HCT116 (cell line): ENCODE measurements at regions of chr19 and their contacts with region 1.

Region 1: DNA sequence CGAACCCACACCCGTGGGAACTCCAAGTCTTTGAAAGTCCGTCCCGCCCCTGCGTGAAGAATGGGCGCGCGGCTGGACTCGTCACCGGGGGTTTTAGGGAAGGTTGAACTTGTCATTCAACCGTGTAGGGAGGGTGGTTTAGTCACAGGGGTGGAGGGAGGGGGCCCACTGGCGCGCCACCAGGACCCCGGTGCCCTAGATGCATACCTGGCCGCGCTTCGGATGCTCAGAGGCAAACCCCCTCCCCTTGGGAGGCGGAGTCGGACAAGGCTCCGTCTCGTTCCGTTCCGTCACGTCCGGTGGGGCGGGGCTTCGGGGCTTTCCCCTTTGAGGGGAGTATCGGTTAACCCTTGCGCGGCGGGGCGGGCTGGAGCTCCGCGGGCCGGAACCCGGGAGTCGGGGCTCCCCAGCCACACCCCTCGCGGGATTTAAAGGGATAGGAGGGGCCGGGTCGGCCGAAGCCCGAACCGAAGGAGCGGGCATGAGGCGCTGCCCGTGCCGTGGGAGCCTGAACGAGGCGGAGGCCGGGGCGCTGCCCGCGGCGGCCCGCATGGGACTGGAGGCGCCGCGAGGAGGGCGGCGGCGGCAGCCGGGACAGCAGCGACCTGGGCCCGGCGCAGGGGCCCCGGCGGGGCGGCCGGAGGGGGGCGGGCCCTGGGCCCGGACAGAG is at the starts of genes COQ8B and ITPKC:
- DNase-seq: peak; percentile 95
- ATAC-seq: peak; percentile 56
- H3K4me3 ChIP-seq: peak within 1 kb of the TSS; percentile 63 to 84
- H3K27ac ChIP-seq: peak within 1 kb of the TSS; percentile 92
- H3K4me1 ChIP-seq: peaks cover 13 to 61% of the 10 kb centered on the region in 2 experiments
- H3K27me3 ChIP-seq: no peaks in the 10 kb centered on the region
- CTCF ChIP-seq: no peak
- POLR2A ChIP-seq: no peak
- RAD21 ChIP-seq: no peak
- total RNA-seq, gene COQ8B: 47.1 TPM
- total RNA-seq, gene ITPKC: 11.4 TPM

Region 2: GRCh38 chr19:40623403-40624251 is 93.2 kb before region 1 on chr19:
- CTCF ChIA-PET with region 1: no interaction called
- POLR2A ChIA-PET with region 1: no interaction called
- RAD21 ChIA-PET with region 1: no interaction called
- intact Hi-C with region 1: no loop called
- DNase-seq: peak; percentile 80
- ATAC-seq: peak; percentile 96
- H3K4me3 ChIP-seq: no peak overlapping the region
- H3K27ac ChIP-seq: peak overlapping the region; percentile 55
- H3K4me1 ChIP-seq: peaks cover 14 to 20% of the 10 kb centered on the region in 2 experiments
- H3K27me3 ChIP-seq: no peaks in the 10 kb centered on the region
- CTCF ChIP-seq: no peak
- POLR2A ChIP-seq: no peak
- RAD21 ChIP-seq: no peak

Region 3: DNA sequence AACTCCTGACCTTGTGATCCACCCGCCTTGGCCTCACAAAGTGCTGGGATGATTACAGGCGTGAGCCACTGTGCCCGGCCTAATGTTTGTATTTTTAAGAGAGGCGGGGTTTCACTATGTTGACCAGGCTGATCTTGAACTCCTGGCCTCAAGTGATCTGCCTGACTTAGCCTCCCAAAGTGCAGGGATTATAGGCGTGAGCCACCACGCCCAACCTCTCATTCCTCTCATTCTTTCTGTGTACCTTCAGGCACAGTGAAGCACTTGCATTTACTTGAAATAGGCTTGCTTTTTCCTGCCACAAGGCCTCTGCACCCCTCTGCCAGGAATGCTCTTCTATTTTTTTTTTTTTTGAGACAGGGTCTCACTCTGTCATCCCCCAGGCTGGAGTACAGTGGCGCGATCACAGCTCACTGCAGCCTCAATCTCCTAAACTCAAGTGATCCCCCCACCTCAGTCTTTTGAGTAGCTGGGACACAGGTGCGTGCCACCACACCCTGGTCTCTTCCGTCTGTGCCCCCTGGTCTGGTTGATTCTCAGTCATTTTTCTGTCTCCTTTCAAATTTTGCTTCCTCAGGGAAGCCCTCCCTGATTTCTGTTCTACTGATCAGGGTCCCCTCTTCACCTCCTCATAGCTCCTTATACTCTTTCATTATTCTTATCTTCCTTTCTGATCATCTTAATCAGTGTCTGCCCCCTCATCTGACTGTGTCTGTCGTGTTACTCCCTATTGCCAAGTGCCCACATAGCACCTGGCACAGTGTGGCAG is 18.4 kb after region 1 on chr19:
- CTCF ChIA-PET with region 1: no interaction called
- POLR2A ChIA-PET with region 1: no interaction called
- RAD21 ChIA-PET with region 1: no interaction called
- intact Hi-C with region 1: no loop called
- DNase-seq: no peak
- ATAC-seq: no peak
- H3K4me3 ChIP-seq: no peak overlapping the region
- H3K27ac ChIP-seq: no peak overlapping the region
- H3K4me1 ChIP-seq: peaks cover 5 to 12% of the 10 kb centered on the region in 2 experiments; a peak in 3 of 4 replicates
- H3K27me3 ChIP-seq: no peaks in the 10 kb centered on the region
- CTCF ChIP-seq: no peak
- POLR2A ChIP-seq: no peak
- RAD21 ChIP-seq: no peak

Region 4: DNA sequence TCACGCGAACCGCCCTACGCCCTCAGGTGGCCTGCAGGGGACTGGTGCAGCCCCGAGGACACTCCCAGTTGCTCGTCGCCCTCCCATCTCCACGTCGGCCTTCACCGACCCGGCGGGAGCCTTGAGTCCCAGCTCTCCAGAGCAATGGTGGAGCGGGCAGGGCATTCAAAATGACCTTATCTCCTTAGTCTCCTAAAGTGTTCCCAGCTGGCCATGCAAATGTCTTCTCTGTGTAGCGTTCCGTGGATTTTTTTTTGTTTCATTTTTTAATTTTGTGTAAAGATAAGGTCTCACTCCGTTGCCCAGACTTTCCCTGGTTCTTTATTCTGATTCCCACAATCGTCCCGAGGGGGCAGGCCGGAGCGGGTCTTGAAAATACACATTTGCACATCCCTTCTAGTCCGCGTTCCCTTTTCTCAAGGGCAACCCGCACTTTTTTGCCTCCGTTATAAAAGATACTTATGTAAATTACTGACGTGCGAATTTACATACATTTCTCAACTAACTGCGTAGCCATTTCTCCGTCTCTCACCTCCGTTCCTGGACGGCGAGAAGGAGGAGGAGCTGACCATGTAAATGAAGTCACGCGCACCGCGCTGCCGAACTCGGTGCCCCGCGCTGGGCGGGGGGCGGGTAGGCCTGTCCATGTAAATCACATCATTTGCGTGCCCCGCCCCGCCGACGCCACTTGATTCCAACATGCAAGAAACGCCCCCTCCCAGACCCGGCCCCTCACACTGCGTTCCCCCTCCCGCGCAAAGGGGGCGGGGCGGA is 81.6 kb after region 1 on chr19:
- CTCF ChIA-PET with region 1: no interaction called
- POLR2A ChIA-PET with region 1: interaction called, 5 read pairs
- RAD21 ChIA-PET with region 1: no interaction called
- intact Hi-C with region 1: loop called (anchors 5 kb)
- DNase-seq: peak; percentile 99
- ATAC-seq: peak; percentile 85
- H3K4me3 ChIP-seq: peak overlapping the region; percentile 55 to 88
- H3K27ac ChIP-seq: peak overlapping the region; percentile 87
- H3K4me1 ChIP-seq: peaks cover 10 to 42% of the 10 kb centered on the region in 2 experiments
- H3K27me3 ChIP-seq: no peaks in the 10 kb centered on the region
- CTCF ChIP-seq: peak; percentile 14 to 47 (median 30); a peak in 3 of 6 replicates
- POLR2A ChIP-seq: no peak
- RAD21 ChIP-seq: no peak